ENCODE measurements at regions of chr4 and their contacts with region 1.

Region 1: DNA sequence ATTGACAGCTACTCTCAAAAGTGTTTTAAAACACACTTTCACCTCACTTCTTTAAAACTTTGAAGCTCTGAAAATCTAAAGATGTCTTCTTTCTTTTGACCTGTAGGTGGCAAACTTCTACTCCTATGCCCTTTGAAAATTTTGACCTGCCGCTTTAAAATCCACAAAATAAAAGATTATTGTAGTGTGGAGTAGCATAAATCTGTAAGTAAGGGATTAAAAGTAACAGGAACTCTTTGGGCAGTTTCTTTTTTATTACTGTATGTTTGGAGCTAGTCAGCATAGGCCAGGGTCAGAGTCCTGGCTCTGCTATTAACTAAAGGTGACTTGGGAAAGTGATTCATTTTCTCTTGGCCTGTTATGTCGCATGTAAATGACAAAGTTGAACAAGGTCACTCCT is 25.5 kb downstream of the BBS12 start:
- DNase-seq: peak; percentile 39
- H3K4me3 ChIP-seq: no peak overlapping the region
- H3K27ac ChIP-seq: peak overlapping the region in 1 of 2 experiments; percentile 55; a peak in 3 of 4 replicates
- H3K4me1 ChIP-seq: peaks cover 2 to 3% of the 10 kb centered on the region in 2 experiments; a peak in 3 of 4 replicates
- H3K27me3 ChIP-seq: no peaks in the 10 kb centered on the region
- CTCF ChIP-seq: peak; percentile 80
- EP300 ChIP-seq: no peak
- RAD21 ChIP-seq: peak; percentile 81

Region 2: GRCh38 chr4:122744229-122744628 is 13.8 kb before region 1 on chr4:
- CTCF ChIA-PET with region 1: interaction called, 24 read pairs
- POLR2A ChIA-PET with region 1: no interaction called
- DNase-seq: no peak
- H3K4me3 ChIP-seq: no peak overlapping the region
- H3K27ac ChIP-seq: no peak overlapping the region; a peak in 1 of 4 replicates
- H3K4me1 ChIP-seq: peaks cover 8 to 12% of the 10 kb centered on the region in 2 experiments; a peak in 3 of 4 replicates
- H3K27me3 ChIP-seq: no peaks in the 10 kb centered on the region
- CTCF ChIP-seq: no peak
- EP300 ChIP-seq: no peak
- RAD21 ChIP-seq: no peak

Region 3: GRCh38 chr4:122903766-122904288 is 145.8 kb after region 1 on chr4:
- CTCF ChIA-PET with region 1: interaction called, 16 read pairs
- POLR2A ChIA-PET with region 1: no interaction called
- DNase-seq: no peak
- H3K4me3 ChIP-seq: no peak overlapping the region
- H3K27ac ChIP-seq: no peak overlapping the region
- H3K4me1 ChIP-seq: peaks cover 0 to 30% of the 10 kb centered on the region in 2 experiments; a peak in 3 of 4 replicates
- H3K27me3 ChIP-seq: no peaks in the 10 kb centered on the region
- CTCF ChIP-seq: no peak
- EP300 ChIP-seq: no peak
- RAD21 ChIP-seq: no peak

Region 4: DNA sequence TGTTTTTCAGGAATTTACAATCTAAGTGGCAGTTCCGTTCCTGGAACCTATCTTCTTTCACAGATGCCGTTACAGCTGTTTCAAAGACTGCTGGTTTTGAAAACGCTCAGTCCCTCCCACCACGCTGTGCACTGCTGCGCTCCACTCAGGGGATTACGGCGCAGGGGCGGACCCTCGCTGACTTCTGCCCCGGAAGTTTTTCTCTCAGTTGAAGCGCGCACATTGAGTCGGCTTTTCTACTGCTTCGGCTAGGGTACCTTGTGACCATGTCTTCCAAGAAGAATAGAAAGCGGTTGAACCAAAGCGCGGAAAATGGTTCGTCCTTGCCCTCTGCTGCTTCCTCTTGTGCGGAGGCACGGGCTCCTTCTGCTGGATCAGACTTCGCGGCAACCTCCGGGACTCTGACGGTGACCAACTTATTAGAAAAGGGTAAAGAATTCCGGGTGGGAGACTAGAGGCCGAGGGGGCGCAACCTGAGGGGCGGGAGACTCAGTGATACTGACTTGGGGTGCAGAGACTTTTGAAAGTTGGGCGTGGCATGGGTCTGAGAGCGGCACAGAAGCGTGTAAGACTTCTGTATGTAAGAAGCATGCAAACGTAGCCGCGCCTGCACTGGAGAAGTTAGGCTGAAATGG is 165.0 kb after region 1 on chr4:
- CTCF ChIA-PET with region 1: interaction called, 43 read pairs
- POLR2A ChIA-PET with region 1: no interaction called
- DNase-seq: peak; percentile 83
- H3K4me3 ChIP-seq: peak overlapping the region; percentile 77 to 96
- H3K27ac ChIP-seq: peak overlapping the region; percentile 67 to 95
- H3K4me1 ChIP-seq: peaks cover 7% of the 10 kb centered on the region in 2 experiments; a peak in 3 of 4 replicates
- H3K27me3 ChIP-seq: no peaks in the 10 kb centered on the region
- CTCF ChIP-seq: no peak; the same call in 1 of the 2 replicates
- EP300 ChIP-seq: no peak
- RAD21 ChIP-seq: no peak

Region 5: GRCh38 chr4:122997463-122998101 is 239.5 kb after region 1 on chr4:
- CTCF ChIA-PET with region 1: no interaction called
- POLR2A ChIA-PET with region 1: no interaction called
- DNase-seq: no peak
- H3K4me3 ChIP-seq: no peak overlapping the region
- H3K27ac ChIP-seq: no peak overlapping the region
- H3K4me1 ChIP-seq: no peaks in the 10 kb centered on the region; a peak in 1 of 4 replicates
- H3K27me3 ChIP-seq: no peaks in the 10 kb centered on the region
- CTCF ChIP-seq: no peak
- EP300 ChIP-seq: no peak
- RAD21 ChIP-seq: no peak

Measured in SK-N-SH (cell line).